ENCODE measurements at regions of chr11 and their contacts with region 1.

Region 1: GRCh38 chr11:62309991-62310390 is 11.1 kb upstream of the SCGB1D4 start:
- DNase-seq: no peak
- ATAC-seq: no peak
- H3K4me3 Mint-ChIP-seq: no peak overlapping the region
- H3K27ac Mint-ChIP-seq: no peak overlapping the region
- H3K4me1 Mint-ChIP-seq: peaks cover 15% of the 10 kb centered on the region
- H3K27me3 Mint-ChIP-seq: peaks cover 51% of the 10 kb centered on the region

Region 2: GRCh38 chr11:62048065-62048464 is 261.9 kb before region 1 on chr11:
- CTCF ChIA-PET with region 1: no interaction called
- DNase-seq: no peak
- ATAC-seq: no peak
- H3K4me3 Mint-ChIP-seq: no peak overlapping the region
- H3K27ac Mint-ChIP-seq: no peak overlapping the region
- H3K4me1 Mint-ChIP-seq: no peaks in the 10 kb centered on the region
- H3K27me3 Mint-ChIP-seq: peaks cover 16% of the 10 kb centered on the region

Region 3: DNA sequence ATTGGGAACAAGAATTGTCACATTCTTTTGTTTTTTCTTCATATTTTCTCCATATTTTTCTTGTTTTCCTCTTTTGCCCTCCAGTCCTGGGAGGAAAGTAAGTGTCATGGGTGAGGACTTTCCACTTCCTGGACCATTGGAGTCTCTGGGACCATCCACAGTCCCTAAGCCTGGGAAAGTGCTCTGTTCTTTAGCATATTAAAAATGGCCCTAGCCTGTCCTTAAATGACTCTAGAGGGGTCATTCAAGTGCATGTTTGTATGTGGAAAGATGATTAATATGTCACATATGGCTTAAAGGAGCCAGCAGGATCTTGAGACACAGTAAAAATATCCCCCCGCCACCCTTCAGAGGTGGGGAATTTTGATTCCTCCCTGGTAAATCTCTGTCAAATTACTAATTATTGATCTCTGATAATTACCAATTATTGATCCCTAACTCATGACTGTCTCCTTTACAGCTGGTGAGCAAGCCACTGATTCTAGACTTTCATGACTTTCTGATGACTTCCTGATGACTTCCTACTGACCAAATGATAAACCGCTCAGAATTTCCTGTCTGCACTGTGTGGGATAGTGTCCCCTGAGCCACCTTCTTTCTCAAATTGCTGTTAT is 139.9 kb before region 1 on chr11:
- CTCF ChIA-PET with region 1: interaction called, 15 read pairs
- DNase-seq: no peak
- ATAC-seq: no peak
- H3K4me3 Mint-ChIP-seq: no peak overlapping the region
- H3K27ac Mint-ChIP-seq: no peak overlapping the region
- H3K4me1 Mint-ChIP-seq: peaks cover 7% of the 10 kb centered on the region
- H3K27me3 Mint-ChIP-seq: peaks cover 54% of the 10 kb centered on the region

Measured in activated CD8-positive, alpha-beta memory T cell treated with anti-CD3 and anti-CD28 coated beads, Interleukin-2, amount 10 ng/mL, durations not matched to agents 7 days and 5 days (primary cell).